ENCODE measurements at regions of chr20 and their contacts with region 1.

Region 1: GRCh38 chr20:25294459-25295385 is 46.8 kb downstream of the PYGB start:
- DNase-seq: no peak

Region 2: DNA sequence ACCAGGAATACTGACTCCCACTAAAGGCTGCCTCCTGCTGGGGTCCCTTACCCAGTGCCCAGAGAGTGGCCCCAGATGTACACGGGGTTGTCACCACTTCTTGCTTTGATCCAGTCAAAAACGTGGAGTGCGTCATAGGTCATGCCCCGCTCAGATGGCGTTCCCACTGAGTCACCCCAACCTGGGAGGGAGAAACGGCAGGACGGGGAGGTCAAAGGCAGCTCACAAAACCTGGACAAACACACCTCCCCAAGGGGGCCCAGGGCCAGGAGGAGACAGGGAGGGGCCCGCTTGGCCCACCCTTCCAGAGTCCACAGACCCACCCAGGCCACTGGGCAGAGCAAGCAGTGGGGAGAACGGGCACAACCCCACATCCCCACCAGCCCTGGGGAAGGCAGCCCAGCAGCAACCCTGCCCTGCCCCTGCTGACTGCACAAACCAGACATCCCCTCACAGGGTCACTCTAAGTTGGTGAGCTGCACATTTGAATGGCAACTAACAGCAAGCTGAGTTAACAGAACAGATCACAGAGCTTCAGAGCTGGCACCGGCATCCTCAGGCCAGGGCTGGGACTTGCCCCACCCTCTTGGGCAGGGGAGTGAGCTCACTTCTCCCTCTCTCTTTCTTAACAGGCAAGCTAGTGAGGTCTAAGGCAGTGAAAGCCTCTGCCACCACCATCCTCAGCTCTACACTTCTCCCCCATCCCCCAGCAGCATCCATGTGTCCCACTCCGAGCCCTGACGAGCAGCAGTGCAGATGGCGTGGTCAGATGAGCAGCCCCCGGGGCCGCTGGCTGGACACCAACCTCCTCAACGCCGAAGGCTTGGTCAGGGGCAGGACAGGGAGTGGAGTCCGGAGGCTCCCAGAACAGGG is 14.9 kb after region 1 on chr20:
- intact Hi-C with region 1: loop called in 1 of 2 experiments (anchors 2 kb)
- DNase-seq: peak; percentile 88

Region 3: GRCh38 chr20:25372584-25373336 is 78.0 kb after region 1 on chr20:
- intact Hi-C with region 1: no loop called
- DNase-seq: no peak

Measured in posterior vena cava (tissue), 2 donors.